ENCODE measurements at regions of chr3 and their contacts with region 1.

Region 1: DNA sequence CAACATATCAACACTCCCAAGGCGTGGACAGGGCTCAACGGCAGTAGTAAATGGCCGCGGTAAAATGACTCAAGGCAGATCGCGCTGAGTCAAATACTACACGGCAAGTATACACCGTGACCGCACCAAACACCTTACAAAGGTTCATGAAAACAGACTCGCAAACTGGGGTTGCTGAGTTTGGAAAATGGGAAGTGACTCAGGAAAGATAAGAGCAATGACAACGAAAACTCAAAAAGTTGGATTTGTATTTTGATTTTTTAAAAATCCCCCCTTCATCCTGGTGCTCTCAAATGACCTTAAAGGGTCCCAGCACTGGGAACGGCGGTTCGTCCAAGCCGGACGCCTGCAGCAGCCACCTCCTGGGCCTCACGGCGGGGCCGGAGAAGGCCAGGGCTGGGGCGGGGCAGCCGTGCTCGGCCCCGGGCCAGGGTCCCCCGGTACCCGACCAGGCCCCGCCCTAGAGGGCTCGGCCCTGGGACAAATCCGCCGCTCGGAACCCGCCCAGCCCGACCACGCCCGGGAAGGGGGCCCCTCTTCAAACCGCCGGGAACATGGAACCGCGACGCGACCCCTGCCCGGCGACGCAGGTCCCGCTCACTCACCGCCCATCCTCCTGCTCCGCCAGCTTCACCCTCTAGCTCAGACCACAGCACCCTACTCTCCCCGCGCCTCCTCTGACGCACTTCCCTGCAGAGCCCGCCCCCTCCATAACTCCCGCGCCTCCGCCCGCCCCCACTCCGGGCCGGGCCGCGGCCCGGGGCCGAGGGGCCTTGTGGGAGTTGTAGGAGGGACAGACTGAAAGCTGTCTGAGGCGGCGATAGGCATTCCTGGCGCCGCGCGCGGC is at the start of gene CLDND1:
- DNase-seq: peak; percentile 99
- ATAC-seq: peak; percentile 100
- total RNA-seq, gene CLDND1: 67.1 TPM

Region 2: DNA sequence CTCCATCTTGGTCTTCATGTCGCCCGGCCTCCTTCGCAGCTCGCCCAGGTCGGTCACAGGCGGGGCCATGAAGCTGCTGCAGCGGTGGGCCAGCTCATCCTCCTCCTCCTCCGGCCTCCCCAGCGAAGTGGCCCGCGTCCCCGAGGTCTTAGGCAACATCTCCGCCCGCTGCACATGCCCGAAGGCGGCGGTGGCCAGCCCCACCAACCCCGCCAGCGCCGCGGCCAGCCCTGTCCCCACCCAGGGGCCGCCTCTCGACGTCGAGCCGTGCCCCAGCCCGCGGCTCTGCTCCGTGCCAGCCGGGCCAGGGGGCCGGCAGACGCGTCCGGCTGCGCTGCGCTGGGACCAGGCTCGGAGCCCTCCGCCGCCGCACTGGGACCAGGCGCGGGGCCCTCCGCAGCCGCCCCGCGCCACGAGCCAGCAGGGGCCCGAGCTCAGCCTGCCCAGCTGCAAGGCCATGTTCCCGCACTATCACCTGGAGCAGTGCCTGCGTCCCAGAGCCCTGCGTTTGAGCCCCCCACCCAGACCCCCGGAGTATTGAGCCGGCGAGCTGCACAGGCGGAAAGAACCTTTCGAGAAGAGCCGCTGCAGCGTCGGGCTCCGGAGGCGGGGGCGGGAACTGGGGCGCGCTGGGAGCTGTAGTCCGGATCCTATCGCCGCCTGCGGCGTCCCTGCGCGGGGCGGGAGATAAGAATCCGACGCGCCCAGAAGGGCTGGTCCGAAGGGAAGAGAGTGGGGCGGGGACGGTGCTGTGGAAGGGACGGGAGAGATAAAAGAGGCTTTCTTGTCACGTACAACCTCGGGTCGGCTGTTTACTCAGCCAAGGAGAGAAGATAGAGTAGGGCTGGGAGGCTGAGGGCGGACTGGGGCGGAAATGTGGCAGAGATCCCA is 70.8 kb after region 1 on chr3 and contains the start of gene CPOX:
- intact Hi-C with region 1: loop called (anchors 2 kb)
- DNase-seq: peak; percentile 96
- ATAC-seq: peak; percentile 98
- total RNA-seq, gene CPOX: 11.8 TPM

Region 3: DNA sequence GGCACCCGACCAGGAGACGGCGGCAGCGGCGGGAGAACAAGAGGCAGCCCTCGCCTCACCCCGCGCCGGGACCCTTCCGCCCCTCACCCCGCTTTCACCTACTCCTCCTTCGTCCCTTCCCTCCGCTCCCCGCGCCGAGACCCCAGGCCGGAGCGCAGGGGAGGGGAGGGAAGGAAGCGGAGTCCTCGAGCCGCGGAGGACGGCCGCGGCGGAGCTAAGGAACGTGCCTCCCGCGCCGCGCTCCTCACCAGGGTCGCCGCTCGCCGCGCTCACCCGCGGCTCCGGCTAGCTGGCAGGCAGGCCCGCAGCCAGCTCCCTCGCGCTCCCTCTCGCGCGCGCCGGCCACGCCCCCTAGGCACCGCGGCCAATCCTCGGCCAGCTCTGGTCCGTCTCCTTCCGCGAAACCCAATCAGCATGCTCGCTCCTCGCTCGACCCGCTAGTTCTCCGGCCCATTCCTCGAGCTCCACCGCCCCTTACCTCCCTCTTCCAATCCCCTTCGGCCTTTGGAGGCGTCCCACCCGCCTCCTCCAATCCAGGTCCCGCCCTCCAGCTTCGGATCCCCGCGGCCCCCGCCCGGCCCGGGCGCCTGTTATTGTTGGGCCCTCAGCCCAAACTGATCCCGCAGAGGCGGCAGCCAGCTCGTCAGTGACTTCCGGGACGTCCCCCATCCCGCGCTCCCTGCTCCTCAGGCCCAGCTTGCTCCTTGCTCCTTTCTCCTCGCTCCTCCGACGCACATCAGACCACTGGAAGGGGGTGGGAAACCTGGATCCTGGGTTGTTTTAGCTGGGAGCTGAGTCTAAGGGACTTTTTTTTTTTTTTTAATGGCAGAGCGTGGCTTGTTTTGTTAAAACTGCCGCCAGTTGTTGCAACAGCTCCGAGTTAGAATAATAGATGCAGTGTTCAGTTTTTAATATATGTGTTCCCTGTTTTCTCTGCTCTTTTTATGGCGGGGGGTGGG is 379.2 kb after region 1 on chr3 and contains the start of gene DCBLD2:
- intact Hi-C with region 1: loop called (anchors 2 kb)
- DNase-seq: peak; percentile 97
- ATAC-seq: peak; percentile 98
- total RNA-seq, gene DCBLD2: 34.7 TPM